ENCODE measurements at regions of chr4 and their contacts with region 1.

Region 1: GRCh38 chr4:70687821-70688794 is at the start of gene UTP3:
- DNase-seq: peak; percentile 85 to 95 (median 92)
- ATAC-seq: peak; percentile 95
- H3K4me3 ChIP-seq: peak within 1 kb of the TSS; percentile 69
- H3K4me3 Mint-ChIP-seq: peak within 1 kb of the TSS; percentile 93 to 99 (median 98)
- H3K27ac ChIP-seq: peak within 1 kb of the TSS; percentile 94
- H3K27ac Mint-ChIP-seq: peak within 1 kb of the TSS; percentile 93 to 100 (median 99)
- H3K4me1 ChIP-seq: peaks cover 7 to 13% of the 10 kb centered on the region in 2 donors
- H3K4me1 Mint-ChIP-seq: peaks cover 12 to 48% (median 46%) of the 10 kb centered on the region in 7 donors
- H3K27me3 ChIP-seq: no peaks in the 10 kb centered on the region
- H3K27me3 Mint-ChIP-seq: no peaks in the 10 kb centered on the region
- total RNA-seq, gene UTP3: 17.4 to 44.9 (median 36.5) TPM

Region 2: GRCh38 chr4:70601422-70602039 is 86.6 kb before region 1 on chr4:
- CTCF ChIA-PET with region 1: no interaction called
- POLR2A ChIA-PET with region 1: no interaction called
- intact Hi-C with region 1: loop called (anchors 1 kb)
- DNase-seq: peak; percentile 29 to 72 (median 61)
- ATAC-seq: peak; percentile 90
- H3K4me3 ChIP-seq: no peak overlapping the region
- H3K4me3 Mint-ChIP-seq: no peak overlapping the region
- H3K27ac ChIP-seq: no peak overlapping the region
- H3K27ac Mint-ChIP-seq: no peak overlapping the region
- H3K4me1 ChIP-seq: no peaks in the 10 kb centered on the region
- H3K4me1 Mint-ChIP-seq: peaks cover 0 to 4% (median 0%) of the 10 kb centered on the region in 7 donors
- H3K27me3 ChIP-seq: no peaks in the 10 kb centered on the region
- H3K27me3 Mint-ChIP-seq: peaks cover 0 to 20% (median 4%) of the 10 kb centered on the region in 5 donors

Region 3: GRCh38 chr4:70624226-70624793 is 63.8 kb before region 1 on chr4:
- CTCF ChIA-PET with region 1: no interaction called
- POLR2A ChIA-PET with region 1: no interaction called
- intact Hi-C with region 1: loop called in 1 of 2 experiments (anchors 2 kb)
- DNase-seq: peak in 1 of 9 donors; percentile 18
- ATAC-seq: no peak
- H3K4me3 ChIP-seq: no peak overlapping the region
- H3K4me3 Mint-ChIP-seq: no peak overlapping the region
- H3K27ac ChIP-seq: no peak overlapping the region
- H3K27ac Mint-ChIP-seq: no peak overlapping the region
- H3K4me1 ChIP-seq: no peaks in the 10 kb centered on the region
- H3K4me1 Mint-ChIP-seq: peaks cover 0 to 6% (median 4%) of the 10 kb centered on the region in 7 donors
- H3K27me3 ChIP-seq: no peaks in the 10 kb centered on the region
- H3K27me3 Mint-ChIP-seq: no peaks in the 10 kb centered on the region

Region 4: GRCh38 chr4:70704331-70705145 is 16.4 kb after region 1 on chr4:
- CTCF ChIA-PET with region 1: interaction called, 29 read pairs
- POLR2A ChIA-PET with region 1: interaction called, 174 read pairs
- intact Hi-C with region 1: loop called (anchors 1 kb)
- DNase-seq: peak; percentile 30 to 63 (median 44)
- ATAC-seq: peak; percentile 67
- H3K4me3 ChIP-seq: peak overlapping the region; percentile 87
- H3K4me3 Mint-ChIP-seq: peak overlapping the region; percentile 82 to 95 (median 93)
- H3K27ac ChIP-seq: peak overlapping the region; percentile 88
- H3K27ac Mint-ChIP-seq: peak overlapping the region; percentile 74 to 98 (median 93)
- H3K4me1 ChIP-seq: peaks cover 12 to 18% of the 10 kb centered on the region in 2 donors
- H3K4me1 Mint-ChIP-seq: peaks cover 17 to 43% (median 33%) of the 10 kb centered on the region in 7 donors
- H3K27me3 ChIP-seq: no peaks in the 10 kb centered on the region
- H3K27me3 Mint-ChIP-seq: no peaks in the 10 kb centered on the region

Region 5: GRCh38 chr4:70721747-70722146 is 33.6 kb after region 1 on chr4 and contains the start of gene RUFY3:
- CTCF ChIA-PET with region 1: interaction called, 3 read pairs
- POLR2A ChIA-PET with region 1: interaction called, 11 read pairs
- intact Hi-C with region 1: loop called in 1 of 2 experiments (anchors 1 kb)
- DNase-seq: no peak
- ATAC-seq: peak; percentile 6
- H3K4me3 ChIP-seq: no peak within 1 kb of the TSS
- H3K4me3 Mint-ChIP-seq: peak within 1 kb of the TSS; percentile 29 to 64 (median 54)
- H3K27ac ChIP-seq: peak within 1 kb of the TSS; percentile 20
- H3K27ac Mint-ChIP-seq: peak within 1 kb of the TSS; percentile 23 to 84 (median 75)
- H3K4me1 ChIP-seq: peaks cover 4 to 19% of the 10 kb centered on the region in 2 donors
- H3K4me1 Mint-ChIP-seq: peaks cover 13 to 36% (median 23%) of the 10 kb centered on the region in 7 donors
- H3K27me3 ChIP-seq: no peaks in the 10 kb centered on the region
- H3K27me3 Mint-ChIP-seq: peaks cover 0 to 3% (median 0%) of the 10 kb centered on the region in 5 donors
- total RNA-seq, gene RUFY3: 17.3 to 41.2 (median 39.3) TPM

Region 6: GRCh38 chr4:70783096-70783495 is 95.0 kb after region 1 on chr4:
- CTCF ChIA-PET with region 1: no interaction called
- POLR2A ChIA-PET with region 1: no interaction called
- intact Hi-C with region 1: no loop called
- DNase-seq: no peak
- ATAC-seq: no peak
- H3K4me3 ChIP-seq: no peak overlapping the region
- H3K4me3 Mint-ChIP-seq: no peak overlapping the region
- H3K27ac ChIP-seq: no peak overlapping the region
- H3K27ac Mint-ChIP-seq: no peak overlapping the region
- H3K4me1 ChIP-seq: no peaks in the 10 kb centered on the region
- H3K4me1 Mint-ChIP-seq: peaks cover 0 to 2% (median 0%) of the 10 kb centered on the region in 7 donors
- H3K27me3 ChIP-seq: no peaks in the 10 kb centered on the region
- H3K27me3 Mint-ChIP-seq: no peaks in the 10 kb centered on the region

Region 7: GRCh38 chr4:70839589-70840093 is 151.5 kb after region 1 on chr4 and contains the start of gene GRSF1:
- CTCF ChIA-PET with region 1: no interaction called
- POLR2A ChIA-PET with region 1: interaction called, 37 read pairs
- intact Hi-C with region 1: loop called (anchors 1 kb)
- DNase-seq: peak; percentile 92 to 96 (median 95)
- ATAC-seq: peak; percentile 96
- H3K4me3 ChIP-seq: peak within 1 kb of the TSS; percentile 83
- H3K4me3 Mint-ChIP-seq: peak within 1 kb of the TSS; percentile 89 to 99 (median 97)
- H3K27ac ChIP-seq: peak within 1 kb of the TSS; percentile 88
- H3K27ac Mint-ChIP-seq: peak within 1 kb of the TSS; percentile 91 to 98 (median 96)
- H3K4me1 ChIP-seq: peaks cover 17 to 22% of the 10 kb centered on the region in 2 donors
- H3K4me1 Mint-ChIP-seq: peaks cover 8 to 40% (median 29%) of the 10 kb centered on the region in 7 donors
- H3K27me3 ChIP-seq: no peaks in the 10 kb centered on the region
- H3K27me3 Mint-ChIP-seq: no peaks in the 10 kb centered on the region
- total RNA-seq, gene GRSF1: 35.9 to 76.0 (median 48.0) TPM

Region 8: DNA sequence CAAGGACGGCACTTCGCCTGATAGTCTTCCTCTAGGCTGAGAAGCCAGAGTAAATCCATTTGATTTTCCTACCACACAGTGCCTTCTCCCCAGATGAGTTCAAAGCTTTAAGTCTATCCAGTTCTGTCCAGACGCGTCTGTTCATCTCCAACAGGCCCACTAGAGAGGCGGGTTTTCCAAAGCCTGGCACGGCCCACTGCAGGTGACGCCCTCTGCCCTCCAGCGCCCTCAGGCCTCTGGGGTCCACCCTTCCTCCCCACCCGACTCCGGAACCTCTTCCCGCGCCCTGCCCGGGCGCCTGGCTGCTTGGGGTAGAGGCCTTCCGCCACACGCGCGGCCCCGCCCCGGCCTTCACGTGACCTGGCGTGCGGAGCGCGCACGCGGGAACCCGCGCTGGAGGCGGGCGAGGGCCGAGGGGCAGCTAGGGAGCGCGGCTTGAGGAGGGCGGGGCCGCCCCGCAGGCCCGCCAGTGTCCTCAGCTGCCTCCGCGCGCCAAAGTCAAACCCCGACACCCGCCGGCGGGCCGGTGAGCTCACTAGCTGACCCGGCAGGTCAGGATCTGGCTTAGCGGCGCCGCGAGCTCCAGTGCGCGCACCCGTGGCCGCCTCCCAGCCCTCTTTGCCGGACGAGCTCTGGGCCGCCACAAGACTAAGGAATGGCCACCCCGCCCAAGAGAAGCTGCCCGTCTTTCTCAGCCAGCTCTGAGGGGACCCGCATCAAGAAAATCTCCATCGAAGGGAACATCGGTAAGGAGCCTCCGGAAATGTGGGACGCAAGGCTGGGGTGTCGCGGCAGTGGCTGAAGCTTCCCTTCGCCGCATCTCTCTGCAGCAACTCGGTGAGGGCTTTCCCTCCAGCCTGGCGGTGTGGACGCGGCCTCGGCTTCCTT is 305.3 kb after region 1 on chr4 and contains the start of gene DCK:
- CTCF ChIA-PET with region 1: no interaction called
- POLR2A ChIA-PET with region 1: interaction called, 5 read pairs
- intact Hi-C with region 1: loop called (anchors 1 kb)
- DNase-seq: peak; percentile 77 to 93 (median 80)
- ATAC-seq: peak; percentile 96
- H3K4me3 ChIP-seq: peak within 1 kb of the TSS; percentile 86
- H3K4me3 Mint-ChIP-seq: peak within 1 kb of the TSS; percentile 86 to 98 (median 94)
- H3K27ac ChIP-seq: peak within 1 kb of the TSS; percentile 79
- H3K27ac Mint-ChIP-seq: peak within 1 kb of the TSS; percentile 84 to 97 (median 94)
- H3K4me1 ChIP-seq: peaks cover 19 to 26% of the 10 kb centered on the region in 2 donors
- H3K4me1 Mint-ChIP-seq: peaks cover 31 to 56% (median 45%) of the 10 kb centered on the region in 7 donors
- H3K27me3 ChIP-seq: no peaks in the 10 kb centered on the region
- H3K27me3 Mint-ChIP-seq: no peaks in the 10 kb centered on the region
- total RNA-seq, gene DCK: 19.8 to 72.8 (median 47.7) TPM